ENCODE measurements at regions of chr1 and their contacts with region 1.

Region 1: DNA sequence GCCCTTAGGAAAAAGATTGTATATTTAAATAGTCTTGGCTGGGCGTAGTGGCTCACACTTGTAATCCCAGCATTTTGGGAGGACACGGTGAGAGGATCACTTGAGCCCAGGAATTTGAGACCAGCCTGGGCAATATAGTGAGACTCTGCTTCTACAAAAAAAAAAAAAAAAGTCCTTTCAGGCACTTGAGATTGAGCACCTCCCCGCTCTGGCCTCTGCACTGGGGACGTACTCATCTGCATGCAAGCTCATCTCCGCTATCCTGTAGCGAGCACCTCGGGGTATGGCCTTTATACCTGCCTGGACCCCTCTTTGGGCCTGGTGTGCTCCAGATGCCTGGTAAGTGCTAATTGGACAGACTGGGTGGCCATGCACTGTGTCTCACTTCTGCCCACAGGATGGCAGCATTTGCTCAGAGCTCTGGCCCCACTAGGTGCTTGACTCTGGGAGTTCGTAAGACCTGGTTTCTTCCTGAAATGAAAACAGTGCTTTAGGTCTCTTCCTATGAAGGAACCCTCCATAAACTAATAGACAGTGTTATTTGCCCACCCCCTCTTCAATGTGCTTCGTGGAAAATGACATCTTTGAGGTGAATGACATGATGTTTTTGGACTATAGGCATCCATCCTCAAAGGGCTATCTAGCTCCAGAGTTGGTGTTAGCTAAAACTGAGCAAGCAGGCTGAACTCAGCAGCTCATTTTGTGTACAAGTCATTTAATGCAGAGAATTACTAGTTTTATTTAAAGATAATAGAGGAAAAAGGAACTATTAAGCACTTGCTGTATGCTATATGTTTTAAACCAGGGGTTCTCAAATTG is 61.7 kb upstream of the ADAR start:
- DNase-seq: peak; percentile 89

Region 2: GRCh38 chr1:154574716-154575115 is 95.0 kb before region 1 on chr1:
- intact Hi-C with region 1: no loop called
- DNase-seq: no peak

Region 3: GRCh38 chr1:154755858-154756730 is 86.4 kb after region 1 on chr1:
- intact Hi-C with region 1: loop called (anchors 5 kb)
- DNase-seq: no peak

Measured in cardiac septum (tissue), 1 donor.